ENCODE measurements at regions of chr7 and their contacts with region 1.

Region 1: GRCh38 chr7:118352854-118353453 is 128.4 kb downstream of the ANKRD7 start:
- DNase-seq: no peak
- H3K4me3 Mint-ChIP-seq: no peak overlapping the region
- H3K27ac Mint-ChIP-seq: no peak overlapping the region
- H3K4me1 Mint-ChIP-seq: no peaks in the 10 kb centered on the region
- H3K27me3 Mint-ChIP-seq: peaks cover 7% of the 10 kb centered on the region

Region 2: DNA sequence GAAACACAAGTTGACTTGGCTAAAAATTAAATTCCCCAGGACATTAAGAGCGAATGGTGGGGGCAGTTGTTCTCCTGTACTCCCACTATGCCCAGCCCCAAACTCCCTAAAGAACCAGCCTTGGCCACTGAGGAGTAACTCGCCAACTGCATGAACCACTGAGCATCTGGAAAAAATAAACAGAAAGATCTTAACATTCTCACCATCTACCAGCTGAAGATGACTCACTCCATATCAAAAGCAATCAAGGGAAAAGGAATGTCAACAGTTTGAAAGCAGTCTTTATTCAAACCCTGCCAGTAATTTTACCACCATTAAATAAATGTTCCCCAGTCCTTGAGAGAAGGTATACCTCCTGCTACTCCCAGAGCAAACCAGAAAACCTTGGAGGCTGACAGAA is 525.1 kb before region 1 on chr7:
- CTCF ChIA-PET with region 1: no interaction called
- intact Hi-C with region 1: no loop called
- DNase-seq: no peak
- H3K4me3 Mint-ChIP-seq: no peak overlapping the region
- H3K27ac Mint-ChIP-seq: no peak overlapping the region
- H3K4me1 Mint-ChIP-seq: no peaks in the 10 kb centered on the region
- H3K27me3 Mint-ChIP-seq: no peaks in the 10 kb centered on the region

Region 3: DNA sequence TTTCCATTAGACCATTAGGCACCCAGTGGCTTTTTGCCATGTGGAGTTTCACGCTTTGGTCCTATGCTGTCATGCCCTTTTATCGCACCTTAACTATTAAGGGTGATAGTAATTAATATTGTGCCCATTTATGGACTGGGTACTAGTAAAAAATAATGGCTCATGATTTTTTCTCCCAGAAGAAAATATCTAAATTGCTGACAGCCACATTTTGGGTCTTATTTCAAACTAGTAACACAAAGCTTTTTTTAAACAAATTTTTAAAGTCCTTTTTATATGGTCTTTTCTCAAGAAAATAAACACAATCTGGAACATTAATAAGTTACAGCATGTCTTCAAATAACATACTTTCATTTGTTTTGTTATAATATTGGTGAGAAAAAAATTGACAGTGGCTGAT is 51.3 kb after region 1 on chr7:
- CTCF ChIA-PET with region 1: no interaction called
- intact Hi-C with region 1: no loop called
- DNase-seq: no peak
- H3K4me3 Mint-ChIP-seq: no peak overlapping the region
- H3K27ac Mint-ChIP-seq: no peak overlapping the region
- H3K4me1 Mint-ChIP-seq: no peaks in the 10 kb centered on the region
- H3K27me3 Mint-ChIP-seq: no peaks in the 10 kb centered on the region

Region 4: GRCh38 chr7:119197877-119198527 is 845.0 kb after region 1 on chr7:
- CTCF ChIA-PET with region 1: no interaction called
- intact Hi-C with region 1: loop called (anchors 1 kb)
- DNase-seq: peak; percentile 13
- H3K4me3 Mint-ChIP-seq: no peak overlapping the region
- H3K27ac Mint-ChIP-seq: no peak overlapping the region
- H3K4me1 Mint-ChIP-seq: no peaks in the 10 kb centered on the region
- H3K27me3 Mint-ChIP-seq: no peaks in the 10 kb centered on the region